Common myeloid progenitor, CD34-positive (primary cell): ENCODE measurements at regions of chr20 and their contacts with region 1.

Region 1: GRCh38 chr20:23050847-23051631 is 1.6 kb upstream of the THBD start:
- DNase-seq: peak; percentile 78 to 88 (median 85)
- H3K4me3 ChIP-seq: peak overlapping the region; percentile 31 to 74 (median 57)
- H3K27ac ChIP-seq: no peak overlapping the region
- H3K4me1 ChIP-seq: peaks cover 0 to 43% (median 38%) of the 10 kb centered on the region in 4 experiments
- H3K27me3 ChIP-seq: peaks cover 0 to 67% (median 16%) of the 10 kb centered on the region in 5 experiments

Region 2: GRCh38 chr20:23034721-23035671 is 16.0 kb before region 1 on chr20 and contains the start of gene SSTR4:
- CTCF ChIA-PET with region 1: interaction called, 11 read pairs
- POLR2A ChIA-PET with region 1: no interaction called
- DNase-seq: peak in 2 of 3 donors; percentile 43
- H3K4me3 ChIP-seq: peak within 1 kb of the TSS in 3 of 7 experiments; percentile 37 to 50 (median 46)
- H3K27ac ChIP-seq: no peak within 1 kb of the TSS
- H3K4me1 ChIP-seq: peaks cover 4 to 31% (median 21%) of the 10 kb centered on the region in 4 experiments
- H3K27me3 ChIP-seq: peaks cover 0 to 42% (median 8%) of the 10 kb centered on the region in 5 experiments

Region 3: DNA sequence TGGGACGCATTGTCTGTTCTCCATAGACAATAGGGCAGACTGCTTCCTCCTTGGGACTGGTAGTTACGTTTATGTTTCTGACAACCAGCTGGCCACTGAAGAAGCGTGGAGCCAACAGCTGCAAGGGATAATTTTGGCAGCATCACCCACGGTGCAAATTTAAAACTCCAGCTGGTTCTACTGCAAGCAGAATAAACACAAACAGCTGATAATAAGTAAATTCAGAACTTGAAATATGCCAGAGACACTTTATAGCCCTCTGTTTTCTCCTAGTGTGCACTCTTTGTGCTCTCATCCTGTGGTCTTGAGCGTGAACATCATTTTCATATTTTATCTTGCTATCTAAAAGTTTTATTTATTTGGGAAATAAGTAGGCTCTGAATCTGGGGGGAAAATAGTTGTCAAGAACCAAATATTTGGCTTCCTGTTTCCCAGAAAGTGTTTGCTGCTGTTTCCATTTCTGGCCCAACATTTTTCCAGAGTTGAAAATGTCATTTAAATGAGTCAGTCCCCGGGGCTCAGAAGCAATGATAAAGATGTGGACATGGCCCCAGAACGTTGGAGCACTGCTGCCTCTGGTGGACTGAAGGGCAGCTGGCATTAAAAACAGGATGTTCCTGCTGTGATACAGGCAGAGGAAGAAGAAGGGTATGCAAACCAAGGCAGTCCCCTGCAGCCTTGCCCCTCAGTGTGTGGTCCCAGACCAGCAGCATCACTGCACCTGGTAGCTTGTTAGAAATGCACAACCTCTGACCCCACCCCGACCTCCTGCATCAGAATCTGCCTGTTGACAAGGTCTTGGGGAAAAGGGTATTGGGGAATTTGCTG is 10.9 kb after region 1 on chr20:
- CTCF ChIA-PET with region 1: interaction called, 40 read pairs
- POLR2A ChIA-PET with region 1: no interaction called
- DNase-seq: peak in 2 of 3 donors; percentile 45 to 46
- H3K4me3 ChIP-seq: no peak overlapping the region
- H3K27ac ChIP-seq: no peak overlapping the region
- H3K4me1 ChIP-seq: peaks cover 0 to 24% (median 5%) of the 10 kb centered on the region in 4 experiments
- H3K27me3 ChIP-seq: no peaks in the 10 kb centered on the region

Region 4: DNA sequence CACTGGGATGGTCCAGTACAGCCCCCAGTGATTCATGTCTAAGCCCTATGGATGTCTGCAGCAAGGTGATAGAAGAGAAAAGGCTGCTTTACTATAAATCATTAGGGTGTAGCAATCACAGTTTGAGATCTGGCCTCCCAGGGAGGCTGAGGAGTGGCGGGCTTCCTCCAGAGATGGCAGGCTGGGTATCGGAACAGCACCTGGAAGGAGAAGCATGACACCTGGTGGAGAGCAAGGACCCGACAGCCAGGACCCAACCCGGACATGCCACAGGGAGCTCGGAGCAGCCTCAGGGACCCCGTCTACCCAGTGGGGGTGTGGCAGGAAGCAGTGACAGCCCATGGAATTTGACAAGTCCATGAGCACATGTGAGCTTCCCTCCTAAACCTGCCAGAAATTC is 149.9 kb after region 1 on chr20:
- CTCF ChIA-PET with region 1: interaction called, 12 read pairs
- POLR2A ChIA-PET with region 1: no interaction called
- DNase-seq: peak; percentile 37 to 60 (median 56)
- H3K4me3 ChIP-seq: no peak overlapping the region
- H3K27ac ChIP-seq: no peak overlapping the region
- H3K4me1 ChIP-seq: no peaks in the 10 kb centered on the region
- H3K27me3 ChIP-seq: peaks cover 0 to 6% (median 0%) of the 10 kb centered on the region in 5 experiments

Region 5: GRCh38 chr20:23235173-23236027 is 184.4 kb after region 1 on chr20:
- CTCF ChIA-PET with region 1: interaction called, 13 read pairs
- POLR2A ChIA-PET with region 1: no interaction called
- DNase-seq: peak; percentile 56 to 76 (median 71)
- H3K4me3 ChIP-seq: no peak overlapping the region
- H3K27ac ChIP-seq: no peak overlapping the region
- H3K4me1 ChIP-seq: peaks cover 0 to 10% (median 6%) of the 10 kb centered on the region in 4 experiments
- H3K27me3 ChIP-seq: peaks cover 0 to 4% (median 0%) of the 10 kb centered on the region in 5 experiments

Region 6: DNA sequence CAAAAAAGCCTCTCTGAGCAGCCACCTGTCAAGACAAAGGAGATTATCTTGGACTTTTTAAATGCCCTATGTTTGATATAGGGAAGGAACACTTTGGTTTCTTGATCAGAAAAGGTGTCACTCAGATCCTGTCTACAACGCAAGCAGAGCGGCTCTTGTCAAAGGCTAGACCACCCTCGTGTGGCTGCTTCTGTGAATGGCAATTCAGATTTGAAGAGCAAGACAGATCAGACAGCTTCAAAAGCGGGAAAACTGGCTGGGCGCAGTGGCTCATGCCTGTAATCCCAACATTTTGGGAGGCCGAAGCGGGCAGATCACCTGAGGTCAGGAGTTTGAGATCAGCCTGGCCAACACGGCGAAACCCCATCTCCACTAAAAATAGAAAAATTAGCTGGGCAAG is 289.5 kb after region 1 on chr20:
- CTCF ChIA-PET with region 1: interaction called, 22 read pairs
- POLR2A ChIA-PET with region 1: no interaction called
- DNase-seq: peak; percentile 67 to 80 (median 78)
- H3K4me3 ChIP-seq: no peak overlapping the region
- H3K27ac ChIP-seq: no peak overlapping the region
- H3K4me1 ChIP-seq: peaks cover 0 to 8% (median 0%) of the 10 kb centered on the region in 4 experiments
- H3K27me3 ChIP-seq: no peaks in the 10 kb centered on the region